Activated T-helper 1 cell treated with anti-CD3 and anti-CD28 coated beads, Interleukin-12 subunit alpha, Interleukin-12 subunit beta, Interleukin-2, Interleukin-4 antibody, amounts not matched to agents 30 ng/mL and 10 ng/mL and 1 ng/mL, durations not matched to agents 14 hours and 24 hours and 36 hours (primary cell): ENCODE measurements at regions of chr9 and their contacts with region 1.

Region 1: GRCh38 chr9:4640027-4640426 is 22.1 kb upstream of the PLPP6 start:
- DNase-seq: no peak
- H3K4me3 Mint-ChIP-seq: no peak overlapping the region
- H3K27ac Mint-ChIP-seq: no peak overlapping the region
- H3K4me1 Mint-ChIP-seq: no peaks in the 10 kb centered on the region
- H3K27me3 Mint-ChIP-seq: peaks cover 9% of the 10 kb centered on the region

Region 2: DNA sequence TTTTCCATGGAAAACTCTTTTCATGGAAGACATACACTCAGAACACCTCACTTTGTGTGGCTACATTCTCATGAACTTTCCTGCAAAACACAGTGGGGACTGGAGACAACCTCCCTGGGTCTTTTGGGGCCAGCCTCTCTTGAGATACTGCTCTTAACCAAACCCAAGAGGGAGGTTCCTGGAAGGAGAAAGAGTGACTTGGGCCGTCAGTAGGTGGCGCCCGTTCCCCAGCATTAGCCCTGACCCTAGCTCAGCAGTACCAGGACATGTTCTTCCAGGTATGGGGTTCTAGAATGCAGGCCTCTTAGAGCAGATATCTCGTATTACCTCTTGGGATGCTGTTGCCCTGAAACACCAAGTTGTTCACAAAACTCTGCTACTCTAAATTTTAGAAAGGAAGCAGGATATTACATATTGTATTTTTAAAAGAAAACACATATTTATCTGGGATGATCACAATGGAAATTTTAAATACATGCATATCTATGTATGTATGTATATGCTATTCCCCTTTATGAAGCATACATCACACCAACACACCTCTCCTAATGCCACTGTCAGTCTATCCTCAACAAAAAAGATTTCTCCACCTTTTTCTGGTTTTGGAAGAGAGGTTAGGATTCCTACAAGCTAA is 324.3 kb before region 1 on chr9:
- intact Hi-C with region 1: loop called (anchors 5 kb)
- DNase-seq: peak; percentile 60
- H3K4me3 Mint-ChIP-seq: no peak overlapping the region
- H3K27ac Mint-ChIP-seq: no peak overlapping the region
- H3K4me1 Mint-ChIP-seq: peaks cover 5% of the 10 kb centered on the region
- H3K27me3 Mint-ChIP-seq: peaks cover 13% of the 10 kb centered on the region

Region 3: GRCh38 chr9:4382722-4383317 is 257.2 kb before region 1 on chr9:
- intact Hi-C with region 1: loop called (anchors 5 kb)
- DNase-seq: no peak
- H3K4me3 Mint-ChIP-seq: no peak overlapping the region
- H3K27ac Mint-ChIP-seq: no peak overlapping the region
- H3K4me1 Mint-ChIP-seq: no peaks in the 10 kb centered on the region
- H3K27me3 Mint-ChIP-seq: peaks cover 4% of the 10 kb centered on the region

Region 4: DNA sequence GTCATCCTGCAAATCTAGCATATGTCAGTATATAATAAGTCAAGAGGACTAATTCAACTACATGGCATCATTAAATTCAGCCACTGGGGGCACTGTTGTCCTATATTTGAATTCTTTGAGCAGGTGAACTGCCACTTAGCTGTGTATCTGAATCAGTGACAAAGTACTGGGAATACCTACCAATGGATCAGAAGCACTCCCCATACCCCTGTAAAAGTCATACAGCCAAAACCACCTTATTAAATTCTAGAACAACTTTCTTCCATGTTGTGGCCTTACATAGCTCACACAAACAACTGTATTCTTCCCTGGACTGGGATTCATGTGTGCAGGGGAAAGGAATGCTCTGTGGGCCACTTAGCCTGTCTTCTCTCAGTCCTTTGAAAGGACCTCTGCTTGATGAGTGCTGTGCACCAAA is 35.3 kb before region 1 on chr9:
- intact Hi-C with region 1: loop called (anchors 2 kb)
- DNase-seq: peak; percentile 56
- H3K4me3 Mint-ChIP-seq: no peak overlapping the region
- H3K27ac Mint-ChIP-seq: no peak overlapping the region
- H3K4me1 Mint-ChIP-seq: peaks cover 17% of the 10 kb centered on the region
- H3K27me3 Mint-ChIP-seq: peaks cover 5% of the 10 kb centered on the region